Activated T-helper 1 cell treated with anti-CD3 and anti-CD28 coated beads, Interleukin-12 subunit alpha, Interleukin-12 subunit beta, Interleukin-2, Interleukin-4 antibody, amounts not matched to agents 30 ng/mL and 10 ng/mL and 1 ng/mL, durations not matched to agents 14 hours and 24 hours and 36 hours (primary cell): ENCODE measurements at regions of chr22 and their contacts with region 1.

Region 1: DNA sequence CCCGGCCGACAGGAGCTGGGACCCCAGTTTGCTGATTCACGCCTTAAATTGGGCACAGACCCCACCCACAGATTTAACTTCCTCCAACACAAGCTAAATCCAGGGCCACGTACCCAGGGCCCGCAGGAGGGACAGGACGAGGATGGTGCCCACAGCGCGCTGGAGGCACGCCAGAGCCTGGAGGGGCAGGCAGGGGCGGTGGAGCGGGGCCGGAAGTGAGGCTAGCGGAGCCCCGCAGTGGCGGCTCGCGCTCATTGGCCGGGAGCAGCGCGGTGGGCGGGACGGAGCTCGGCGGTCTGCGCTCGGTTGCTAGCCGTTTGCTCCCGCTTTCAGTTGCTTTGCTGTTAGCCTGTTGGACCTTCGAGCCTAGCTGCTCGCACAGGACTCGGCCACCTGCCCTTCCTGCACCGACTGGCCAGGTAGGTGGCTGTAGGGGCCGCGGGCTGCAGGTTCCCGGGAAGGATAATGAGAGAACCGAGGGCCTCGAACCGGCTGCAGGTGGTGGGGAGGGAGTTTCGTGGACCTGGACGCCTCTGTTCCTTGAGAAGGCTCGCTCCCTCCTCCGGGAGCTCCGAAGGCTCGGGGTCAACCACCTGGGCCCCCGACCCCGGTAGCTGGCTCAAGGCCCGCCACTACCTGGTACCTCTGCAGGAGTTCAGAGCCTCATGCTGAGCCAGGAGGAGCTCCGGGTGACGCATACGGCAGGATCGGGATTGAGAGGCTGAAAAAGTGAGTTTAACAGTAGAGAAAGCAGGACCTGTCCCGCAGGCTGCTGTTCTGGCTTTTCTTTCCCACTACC is at the start of gene CCDC134:
- DNase-seq: peak; percentile 90
- H3K4me3 Mint-ChIP-seq: peak within 1 kb of the TSS; percentile 99
- H3K27ac Mint-ChIP-seq: peak within 1 kb of the TSS; percentile 98
- H3K4me1 Mint-ChIP-seq: peaks cover 35% of the 10 kb centered on the region
- H3K27me3 Mint-ChIP-seq: no peaks in the 10 kb centered on the region
- total RNA-seq, gene CCDC134: 18.0 and 19.6 TPM in 2 replicates

Region 2: DNA sequence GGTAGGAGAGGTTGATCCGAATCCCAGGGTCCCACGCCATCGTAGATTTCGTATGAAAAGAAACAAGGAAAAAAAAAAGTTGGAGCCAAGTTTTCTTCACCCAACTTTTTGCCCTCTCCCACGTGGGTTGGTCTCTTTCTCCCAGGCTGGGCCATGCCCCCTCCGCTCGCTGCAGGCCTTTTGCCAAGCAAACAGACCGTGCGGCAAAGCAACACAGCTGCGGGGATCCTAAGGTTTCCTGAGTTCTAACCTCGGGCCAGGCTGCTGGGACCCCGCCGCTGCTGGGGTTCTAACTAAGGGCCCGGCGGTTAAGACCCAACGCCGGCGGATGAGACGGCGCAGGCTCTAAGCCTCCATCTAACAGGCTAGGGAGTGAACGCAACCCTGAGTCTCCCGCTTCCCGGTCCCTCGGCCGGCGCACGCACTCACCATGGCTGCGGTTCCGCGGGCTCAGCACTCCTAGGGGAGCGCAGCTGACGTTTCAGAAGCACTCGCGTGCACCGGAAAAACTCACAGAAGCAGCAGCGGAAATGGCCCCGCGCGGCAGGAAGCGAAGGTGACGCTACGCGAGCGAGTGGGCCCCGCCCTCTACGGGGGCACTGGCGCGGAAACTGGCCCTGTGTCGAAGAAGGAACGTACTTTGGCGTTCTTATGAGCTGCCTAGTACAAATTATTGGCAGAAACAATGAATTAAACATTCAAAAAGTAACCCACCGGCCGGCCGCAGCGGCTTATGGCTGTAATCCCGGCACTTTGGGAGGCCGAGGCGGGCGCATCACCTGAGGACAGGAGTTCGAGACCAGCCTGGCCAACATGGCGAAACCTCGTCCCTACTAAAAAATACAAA is 112.0 kb before region 1 on chr22 and contains the start of gene SNU13:
- intact Hi-C with region 1: loop called (anchors 1 kb)
- DNase-seq: peak; percentile 92
- H3K4me3 Mint-ChIP-seq: peak within 1 kb of the TSS; percentile 98
- H3K27ac Mint-ChIP-seq: peak within 1 kb of the TSS; percentile 98
- H3K4me1 Mint-ChIP-seq: peaks cover 17% of the 10 kb centered on the region
- H3K27me3 Mint-ChIP-seq: no peaks in the 10 kb centered on the region
- total RNA-seq, gene SNU13: 337 and 339 TPM in 2 replicates

Region 3: GRCh38 chr22:41746567-41747400 is 53.8 kb before region 1 on chr22:
- intact Hi-C with region 1: loop called (anchors 1 kb)
- DNase-seq: peak; percentile 42
- H3K4me3 Mint-ChIP-seq: no peak overlapping the region
- H3K27ac Mint-ChIP-seq: no peak overlapping the region
- H3K4me1 Mint-ChIP-seq: peaks cover 8% of the 10 kb centered on the region
- H3K27me3 Mint-ChIP-seq: peaks cover 41% of the 10 kb centered on the region

Region 4: GRCh38 chr22:41762980-41763779 is 37.4 kb before region 1 on chr22:
- intact Hi-C with region 1: no loop called
- DNase-seq: no peak
- H3K4me3 Mint-ChIP-seq: no peak overlapping the region
- H3K27ac Mint-ChIP-seq: no peak overlapping the region
- H3K4me1 Mint-ChIP-seq: peaks cover under 1% of the 10 kb centered on the region
- H3K27me3 Mint-ChIP-seq: peaks cover 3% of the 10 kb centered on the region

Region 5: DNA sequence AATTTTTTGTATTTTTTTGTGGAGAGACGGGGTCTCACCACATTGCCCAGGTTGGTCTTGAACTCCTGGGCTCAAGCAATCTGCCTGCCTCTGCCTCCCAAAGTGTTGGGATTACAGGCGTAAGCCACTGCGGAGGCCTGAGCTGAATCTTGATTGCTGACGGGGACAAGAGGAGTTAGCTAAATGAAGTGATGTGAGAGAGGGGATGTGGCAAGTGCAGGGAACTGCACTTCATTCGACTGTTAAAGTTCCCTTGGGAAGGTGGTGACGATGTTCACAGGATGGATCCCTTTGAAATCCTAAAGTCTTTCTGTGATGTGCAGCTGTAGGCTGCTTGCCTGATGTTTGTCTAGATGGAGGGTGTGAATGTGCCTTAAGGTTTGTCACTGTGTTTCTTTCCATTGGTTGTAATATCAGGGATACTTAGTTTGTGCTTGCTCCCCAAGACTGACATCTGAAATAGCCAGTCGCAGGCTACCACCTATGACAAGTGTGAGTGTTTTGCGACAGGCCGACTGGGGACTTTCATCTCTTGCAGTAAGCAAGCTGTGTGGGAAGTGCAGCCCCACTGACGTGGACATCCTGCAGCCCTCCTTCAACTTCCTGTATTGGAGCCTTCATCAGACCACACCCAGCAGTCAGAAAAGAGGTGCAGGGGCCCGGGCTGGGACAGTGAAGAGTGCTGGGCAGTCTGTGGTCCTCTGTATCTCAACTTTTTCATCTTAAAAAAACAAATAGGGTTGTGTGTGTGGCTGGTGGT is 19.6 kb before region 1 on chr22:
- intact Hi-C with region 1: loop called (anchors 1 kb)
- DNase-seq: peak; percentile 90
- H3K4me3 Mint-ChIP-seq: peak overlapping the region; percentile 83
- H3K27ac Mint-ChIP-seq: peak overlapping the region; percentile 91
- H3K4me1 Mint-ChIP-seq: peaks cover 41% of the 10 kb centered on the region
- H3K27me3 Mint-ChIP-seq: peaks cover 2% of the 10 kb centered on the region

Region 6: GRCh38 chr22:41822317-41823060 is 21.9 kb after region 1 on chr22:
- intact Hi-C with region 1: loop called (anchors 1 kb)
- DNase-seq: peak; percentile 23
- H3K4me3 Mint-ChIP-seq: no peak overlapping the region
- H3K27ac Mint-ChIP-seq: peak overlapping the region; percentile 82
- H3K4me1 Mint-ChIP-seq: peaks cover 36% of the 10 kb centered on the region
- H3K27me3 Mint-ChIP-seq: no peaks in the 10 kb centered on the region